ENCODE measurements at regions of chr14 and their contacts with region 1.

Region 1: DNA sequence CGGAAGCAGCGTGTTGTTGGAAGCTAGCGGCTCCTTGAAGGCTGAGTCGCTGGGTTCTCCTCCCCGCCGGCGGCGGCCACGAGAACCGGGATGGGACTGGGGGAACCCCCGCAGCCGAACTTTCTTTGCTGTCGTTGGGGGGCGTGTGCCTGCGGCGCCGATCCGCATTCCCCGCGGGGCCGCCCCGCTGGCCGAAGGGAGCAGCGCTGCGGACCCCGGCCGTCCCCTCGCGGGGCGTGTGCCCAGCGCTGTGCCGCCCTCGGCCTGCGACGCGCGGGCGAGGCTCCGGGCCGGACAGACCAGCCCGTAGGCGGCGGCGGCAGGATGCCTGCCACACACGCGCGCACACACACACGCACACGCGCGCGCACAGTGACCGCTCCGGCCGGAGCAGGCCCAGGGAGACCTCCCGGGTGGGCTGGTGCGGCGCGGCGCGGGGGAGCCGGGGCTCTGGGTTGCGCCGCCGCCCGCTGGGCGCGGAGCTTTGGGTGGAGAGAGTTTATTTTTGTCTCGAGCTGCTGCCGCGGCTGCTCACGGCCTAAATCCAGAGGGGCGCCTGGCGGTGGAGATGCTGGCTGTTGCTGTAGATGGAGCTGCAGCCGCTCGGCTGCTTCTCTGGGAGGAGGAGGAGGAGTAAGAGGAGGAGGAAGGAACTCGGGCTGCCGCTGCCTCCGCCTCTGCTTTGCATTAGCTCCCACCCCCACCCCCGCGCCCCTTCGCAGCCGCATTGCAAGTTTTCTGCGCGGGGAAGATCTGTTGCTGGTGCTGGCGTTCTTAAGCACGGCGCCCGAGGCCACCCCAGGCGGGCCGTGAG is at the start of gene SAMD4A:
- DNase-seq: peak; percentile 84
- H3K4me3 ChIP-seq: peak within 1 kb of the TSS; percentile 41 to 87 (median 75)
- H3K27ac ChIP-seq: peak within 1 kb of the TSS; percentile 80
- H3K4me1 ChIP-seq: peaks cover 38% of the 10 kb centered on the region
- H3K27me3 ChIP-seq: no peaks in the 10 kb centered on the region
- CTCF ChIP-seq: peak in 1 of 2 donors; percentile 34
- POLR2A ChIP-seq: no peak
- total RNA-seq, gene SAMD4A: 88.8 and 95.3 TPM in 2 replicates

Region 2: DNA sequence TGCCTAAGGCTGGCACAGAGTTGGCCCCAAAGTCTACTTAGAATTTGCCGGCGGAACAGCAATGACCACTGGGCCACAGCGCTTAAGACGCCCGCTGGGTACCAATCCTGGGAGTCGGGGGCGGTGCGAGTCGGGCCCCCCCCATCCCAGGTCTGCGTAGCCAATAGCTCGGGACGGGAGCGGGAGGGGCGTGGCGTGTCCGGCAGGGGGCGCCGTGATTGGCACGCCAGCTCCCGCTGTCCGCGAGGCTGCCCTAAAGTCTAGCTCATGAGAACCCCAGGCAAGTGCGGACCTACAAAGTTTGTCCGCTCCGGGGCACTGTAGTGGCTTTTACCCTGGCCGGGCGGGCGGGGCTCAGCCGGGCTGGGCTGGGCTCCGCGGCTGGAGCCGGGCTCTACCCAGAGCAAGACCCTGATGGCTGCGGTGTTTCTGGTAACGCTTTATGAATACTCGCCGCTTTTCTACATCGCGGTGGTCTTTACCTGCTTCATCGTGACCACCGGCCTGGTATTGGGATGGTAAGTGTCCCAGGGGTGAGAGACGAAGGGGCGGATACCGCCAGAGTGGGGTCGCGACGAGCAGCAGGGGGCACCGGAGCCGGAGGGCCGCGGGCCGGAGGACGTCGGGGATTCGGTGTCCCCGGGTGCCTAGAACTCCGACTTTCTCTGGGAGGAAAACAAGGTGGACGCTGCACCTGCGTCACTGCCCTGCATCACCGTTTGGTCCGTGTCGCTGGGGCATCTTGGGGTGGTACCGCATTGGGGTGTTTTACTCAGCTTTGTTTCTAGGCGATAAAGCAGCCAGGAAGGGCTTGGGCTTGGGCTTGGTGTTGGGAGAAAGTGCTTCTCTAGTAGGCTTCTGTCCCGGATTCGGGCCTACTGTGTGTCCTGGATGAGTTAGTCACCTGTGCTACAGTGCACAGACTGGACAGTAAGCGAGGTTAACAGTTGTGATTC is 56.8 kb before region 1 on chr14 and contains the start of gene CGRRF1:
- CTCF ChIA-PET with region 1: interaction called, 13 read pairs
- POLR2A ChIA-PET with region 1: no interaction called
- dilution Hi-C with region 1: no loop called
- intact Hi-C with region 1: loop called (anchors 1 kb)
- DNase-seq: peak; percentile 99
- H3K4me3 ChIP-seq: peak within 1 kb of the TSS; percentile 20 to 92 (median 91)
- H3K27ac ChIP-seq: peak within 1 kb of the TSS; percentile 10
- H3K4me1 ChIP-seq: peaks cover 9% of the 10 kb centered on the region
- H3K27me3 ChIP-seq: no peaks in the 10 kb centered on the region
- CTCF ChIP-seq: peak; percentile 18 to 65
- POLR2A ChIP-seq: peak; percentile 88
- total RNA-seq, gene CGRRF1: 15.7 and 15.8 TPM in 2 replicates

Region 3: GRCh38 chr14:54627540-54628363 is 61.1 kb after region 1 on chr14:
- CTCF ChIA-PET with region 1: interaction called, 9 read pairs
- POLR2A ChIA-PET with region 1: interaction called, 3 read pairs
- dilution Hi-C with region 1: no loop called
- intact Hi-C with region 1: loop called (anchors 1 kb)
- DNase-seq: peak; percentile 88
- H3K4me3 ChIP-seq: peak overlapping the region; percentile 11 to 57 (median 19)
- H3K27ac ChIP-seq: peak overlapping the region; percentile 97
- H3K4me1 ChIP-seq: peaks cover 63% of the 10 kb centered on the region
- H3K27me3 ChIP-seq: no peaks in the 10 kb centered on the region
- CTCF ChIP-seq: no peak
- POLR2A ChIP-seq: no peak

Region 4: GRCh38 chr14:54691525-54692283 is 125.1 kb after region 1 on chr14:
- CTCF ChIA-PET with region 1: interaction called, 78 read pairs
- POLR2A ChIA-PET with region 1: interaction called, 14 read pairs
- dilution Hi-C with region 1: no loop called
- intact Hi-C with region 1: loop called (anchors 1 kb)
- DNase-seq: peak; percentile 82
- H3K4me3 ChIP-seq: no peak overlapping the region
- H3K27ac ChIP-seq: peak overlapping the region; percentile 25
- H3K4me1 ChIP-seq: peaks cover 18% of the 10 kb centered on the region
- H3K27me3 ChIP-seq: no peaks in the 10 kb centered on the region
- CTCF ChIP-seq: peak; percentile 89 to 92
- POLR2A ChIP-seq: no peak

Region 5: GRCh38 chr14:54756656-54757392 is 190.2 kb after region 1 on chr14:
- CTCF ChIA-PET with region 1: interaction called, 12 read pairs
- POLR2A ChIA-PET with region 1: no interaction called
- dilution Hi-C with region 1: no loop called
- intact Hi-C with region 1: no loop called
- DNase-seq: no peak
- H3K4me3 ChIP-seq: no peak overlapping the region
- H3K27ac ChIP-seq: no peak overlapping the region
- H3K4me1 ChIP-seq: peaks cover 23% of the 10 kb centered on the region
- H3K27me3 ChIP-seq: no peaks in the 10 kb centered on the region
- CTCF ChIP-seq: no peak
- POLR2A ChIP-seq: no peak

Region 6: GRCh38 chr14:54837508-54838149 is 271.0 kb after region 1 on chr14:
- CTCF ChIA-PET with region 1: no interaction called
- POLR2A ChIA-PET with region 1: interaction called, 13 read pairs
- dilution Hi-C with region 1: no loop called
- intact Hi-C with region 1: no loop called
- DNase-seq: no peak
- H3K4me3 ChIP-seq: no peak overlapping the region
- H3K27ac ChIP-seq: no peak overlapping the region
- H3K4me1 ChIP-seq: no peaks in the 10 kb centered on the region
- H3K27me3 ChIP-seq: no peaks in the 10 kb centered on the region
- CTCF ChIP-seq: no peak
- POLR2A ChIP-seq: no peak